OCI-LY7 (cell line): ENCODE measurements at regions of chr6 and their contacts with region 1.

Region 1: DNA sequence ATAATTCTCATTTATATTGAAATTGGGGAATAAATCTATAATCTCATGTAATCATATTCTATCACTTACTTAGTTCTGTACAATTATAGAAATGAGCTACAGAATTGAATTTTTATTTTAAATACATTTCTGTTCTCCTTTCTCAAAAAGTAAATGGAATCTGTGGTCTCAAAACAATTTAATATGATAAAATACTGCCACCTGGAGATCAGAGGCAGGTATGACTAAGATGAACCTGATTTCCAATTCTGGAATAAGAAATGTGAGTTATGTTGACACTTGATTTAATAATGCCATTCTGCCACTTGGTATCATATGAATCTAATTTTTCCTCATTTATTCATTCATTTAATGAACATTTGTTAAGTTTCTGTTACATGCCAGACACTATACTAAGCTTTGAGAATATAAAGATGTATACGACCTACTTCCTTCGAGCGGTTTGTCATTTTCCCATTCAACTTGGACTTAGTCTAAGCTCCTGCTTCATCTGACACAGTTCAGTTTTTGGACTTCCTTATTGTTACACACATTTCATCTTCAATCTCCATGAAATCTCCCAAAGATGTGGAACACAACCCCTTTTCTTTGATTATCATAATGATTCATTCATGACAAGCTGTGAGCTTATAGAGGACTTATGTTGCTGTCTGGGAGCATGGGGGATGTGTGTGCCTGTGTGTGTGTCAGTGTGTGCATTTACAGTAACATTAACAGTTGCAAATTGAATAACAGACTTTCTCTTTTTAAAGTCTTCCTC is 7.5 kb upstream of the CCDC28A start:
- DNase-seq: peak; percentile 55
- H3K4me3 ChIP-seq: no peak overlapping the region
- H3K27ac ChIP-seq: no peak overlapping the region
- H3K4me1 ChIP-seq: no peaks in the 10 kb centered on the region
- CTCF ChIP-seq: peak; percentile 94

Region 2: DNA sequence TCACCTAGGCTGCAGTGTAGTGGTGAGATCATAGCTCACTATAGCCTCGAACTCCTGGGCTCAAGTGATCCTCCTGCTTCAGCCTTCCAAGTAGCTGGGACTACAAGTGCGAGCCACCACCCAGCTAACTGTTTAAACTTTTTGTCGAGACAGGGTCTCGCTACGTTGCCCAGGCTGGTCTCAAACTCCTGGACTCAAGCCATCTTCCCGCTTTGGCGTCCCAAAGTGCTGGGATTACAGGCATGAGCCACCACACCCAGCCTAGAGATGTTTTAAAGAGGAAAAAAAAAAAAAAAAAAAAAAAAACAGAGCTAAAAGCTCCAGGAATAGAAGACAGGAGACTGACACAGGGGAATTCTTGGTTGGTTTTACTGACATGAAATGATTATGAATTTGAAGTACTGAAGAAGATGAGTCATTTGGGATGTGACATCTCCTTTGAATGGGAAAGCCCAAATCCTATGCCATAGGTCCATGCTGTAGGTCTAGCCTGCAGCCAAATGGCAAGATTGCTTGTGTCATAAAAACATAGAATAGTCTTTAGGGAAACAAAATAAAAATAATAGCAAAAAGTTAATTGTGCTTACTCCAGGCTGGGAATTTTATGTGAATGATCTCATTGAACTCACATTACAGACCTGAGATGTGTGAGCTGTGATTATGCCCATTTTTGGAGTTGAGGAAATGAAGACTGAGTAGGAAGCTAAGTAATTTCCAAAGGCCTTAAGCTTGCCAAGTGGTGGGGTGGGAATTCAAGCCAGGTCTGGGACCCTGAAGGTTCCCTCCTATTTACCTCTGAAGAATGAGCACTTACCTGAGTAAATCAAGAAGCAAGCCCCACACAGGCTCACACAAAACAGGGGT is 242.5 kb before region 1 on chr6:
- CTCF ChIA-PET with region 1: no interaction called
- POLR2A ChIA-PET with region 1: no interaction called
- intact Hi-C with region 1: no loop called
- DNase-seq: no peak
- H3K4me3 ChIP-seq: no peak overlapping the region
- H3K27ac ChIP-seq: no peak overlapping the region
- H3K4me1 ChIP-seq: peaks cover 5% of the 10 kb centered on the region
- CTCF ChIP-seq: no peak

Region 3: GRCh38 chr6:138588805-138589434 is 177.2 kb before region 1 on chr6:
- CTCF ChIA-PET with region 1: no interaction called
- POLR2A ChIA-PET with region 1: interaction called, 3 read pairs
- intact Hi-C with region 1: loop called (anchors 1 kb)
- DNase-seq: peak; percentile 68
- H3K4me3 ChIP-seq: no peak overlapping the region
- H3K27ac ChIP-seq: no peak overlapping the region
- H3K4me1 ChIP-seq: peaks cover 16% of the 10 kb centered on the region
- CTCF ChIP-seq: peak; percentile 97

Region 4: DNA sequence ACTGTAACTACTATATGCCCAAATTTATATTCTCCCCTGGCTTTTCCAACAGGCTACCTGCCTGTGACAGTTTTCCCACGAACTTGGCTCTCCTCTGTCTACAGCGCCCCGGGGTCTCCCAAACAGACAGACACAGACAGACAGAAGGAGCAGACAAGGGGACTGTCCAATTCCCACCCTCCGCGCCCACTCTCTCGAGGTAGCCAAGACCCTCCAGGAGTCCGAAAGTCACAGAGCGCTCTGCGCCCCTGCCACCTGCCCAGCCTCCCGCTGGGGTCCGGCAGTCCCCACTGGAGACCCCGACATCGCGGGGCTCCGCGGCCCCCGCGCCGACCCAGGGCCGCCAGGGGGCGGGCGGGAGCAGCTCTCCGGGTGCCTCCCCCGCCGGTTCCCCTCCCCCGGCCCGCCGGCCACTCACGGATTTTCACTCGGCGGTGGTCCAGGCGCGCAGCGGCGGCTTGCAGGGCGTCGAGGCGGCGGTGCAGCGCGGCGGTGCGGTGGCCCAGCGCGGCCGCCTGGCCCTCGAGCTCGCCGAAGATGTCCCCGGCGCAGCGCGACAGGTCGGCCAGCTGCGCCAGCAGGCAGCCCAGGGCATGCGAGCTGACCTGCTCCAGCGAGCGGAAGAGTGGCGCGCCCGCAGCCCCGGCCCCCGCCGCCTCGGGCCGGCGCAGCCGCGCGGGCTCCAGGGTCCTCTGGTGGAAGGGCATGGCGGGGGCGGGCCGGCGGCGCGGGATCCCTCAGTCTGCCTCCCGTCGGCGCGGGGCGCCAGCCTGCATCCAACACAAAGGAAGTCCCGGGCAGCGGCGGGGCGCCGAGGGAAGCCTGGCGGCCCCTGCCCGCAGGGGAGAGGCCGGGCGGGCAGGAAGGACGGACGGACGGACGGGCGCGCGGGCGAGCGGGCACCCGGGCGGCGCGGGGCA is 73.8 kb before region 1 on chr6:
- CTCF ChIA-PET with region 1: no interaction called
- POLR2A ChIA-PET with region 1: no interaction called
- intact Hi-C with region 1: loop called (anchors 1 kb)
- DNase-seq: peak; percentile 53
- H3K4me3 ChIP-seq: peak overlapping the region; percentile 73
- H3K27ac ChIP-seq: no peak overlapping the region
- H3K4me1 ChIP-seq: no peaks in the 10 kb centered on the region
- CTCF ChIP-seq: peak; percentile 80

Region 5: DNA sequence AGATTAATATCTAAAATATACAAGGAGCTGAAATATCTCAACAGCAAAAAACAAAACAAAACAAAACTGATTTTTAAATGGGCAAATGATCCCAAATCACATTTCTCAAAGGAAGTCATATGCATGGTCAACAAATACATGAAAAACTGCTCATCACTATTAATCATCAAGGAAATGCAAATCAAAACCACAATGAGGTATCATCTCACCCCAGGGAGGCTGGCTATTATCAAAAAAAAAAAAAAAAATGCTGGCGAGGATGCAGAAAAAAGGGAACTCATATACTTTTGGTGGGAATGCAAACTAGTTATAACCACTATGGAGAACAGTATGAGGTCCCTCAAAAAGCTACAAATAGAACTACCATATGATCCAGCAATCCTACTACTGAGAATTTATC is 187.4 kb after region 1 on chr6:
- CTCF ChIA-PET with region 1: no interaction called
- POLR2A ChIA-PET with region 1: no interaction called
- intact Hi-C with region 1: no loop called
- DNase-seq: no peak
- H3K4me3 ChIP-seq: no peak overlapping the region
- H3K27ac ChIP-seq: no peak overlapping the region
- H3K4me1 ChIP-seq: peaks cover 15% of the 10 kb centered on the region
- CTCF ChIP-seq: no peak